Caco-2 (cell line): ENCODE measurements at regions of chr14 and their contacts with region 1.

Region 1: DNA sequence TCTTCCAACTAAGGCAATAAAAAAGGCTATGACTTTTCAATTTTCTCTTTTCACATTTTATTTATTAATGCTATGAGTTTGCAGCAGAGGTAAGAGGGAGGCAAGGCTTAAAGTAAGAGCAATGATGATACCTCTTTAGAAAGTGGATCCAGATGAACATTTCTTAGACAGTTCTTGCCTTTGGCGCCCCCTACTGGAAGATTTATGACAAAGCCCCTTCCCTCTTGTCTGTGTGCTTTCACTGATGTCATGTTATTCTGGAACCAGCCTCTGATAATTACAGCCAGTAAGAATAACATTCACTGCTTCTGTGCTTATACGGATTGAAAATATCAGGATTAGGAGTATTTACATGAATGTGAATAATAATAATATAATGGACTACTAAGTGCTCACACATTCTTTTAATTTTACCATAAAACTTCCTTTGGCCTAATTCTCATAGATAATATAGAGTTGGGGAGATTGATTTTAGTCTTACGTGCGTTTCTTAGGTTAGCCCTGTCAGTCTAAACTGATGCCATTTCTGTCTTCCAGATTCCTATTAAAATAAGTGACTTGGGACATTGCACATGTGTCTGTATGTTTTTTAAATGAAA is 1929.9 kb upstream of the SEL1L start:
- DNase-seq: peak; percentile 43 to 52
- H3K4me3 ChIP-seq: no peak overlapping the region
- H3K4me3 Mint-ChIP-seq: no peak overlapping the region
- H3K27ac Mint-ChIP-seq: no peak overlapping the region
- H3K4me1 ChIP-seq: no peaks in the 10 kb centered on the region
- H3K4me1 Mint-ChIP-seq: no peaks in the 10 kb centered on the region
- H3K27me3 ChIP-seq: no peaks in the 10 kb centered on the region
- H3K27me3 Mint-ChIP-seq: no peaks in the 10 kb centered on the region
- CTCF ChIP-seq: peak; percentile 32 to 59

Region 2: GRCh38 chr14:83300476-83301064 is 163.0 kb before region 1 on chr14:
- CTCF ChIA-PET with region 1: no interaction called
- POLR2A ChIA-PET with region 1: no interaction called
- intact Hi-C with region 1: loop called (anchors 1 kb)
- DNase-seq: peak in 1 of 2 experiments; percentile 11
- H3K4me3 ChIP-seq: no peak overlapping the region
- H3K4me3 Mint-ChIP-seq: no peak overlapping the region
- H3K27ac Mint-ChIP-seq: no peak overlapping the region
- H3K4me1 ChIP-seq: no peaks in the 10 kb centered on the region
- H3K4me1 Mint-ChIP-seq: no peaks in the 10 kb centered on the region
- H3K27me3 ChIP-seq: no peaks in the 10 kb centered on the region
- H3K27me3 Mint-ChIP-seq: peaks cover 6% of the 10 kb centered on the region
- CTCF ChIP-seq: peak; percentile 56 to 80